T-cell (primary cell): ENCODE measurements at regions of chr6 and their contacts with region 1.

Region 1: DNA sequence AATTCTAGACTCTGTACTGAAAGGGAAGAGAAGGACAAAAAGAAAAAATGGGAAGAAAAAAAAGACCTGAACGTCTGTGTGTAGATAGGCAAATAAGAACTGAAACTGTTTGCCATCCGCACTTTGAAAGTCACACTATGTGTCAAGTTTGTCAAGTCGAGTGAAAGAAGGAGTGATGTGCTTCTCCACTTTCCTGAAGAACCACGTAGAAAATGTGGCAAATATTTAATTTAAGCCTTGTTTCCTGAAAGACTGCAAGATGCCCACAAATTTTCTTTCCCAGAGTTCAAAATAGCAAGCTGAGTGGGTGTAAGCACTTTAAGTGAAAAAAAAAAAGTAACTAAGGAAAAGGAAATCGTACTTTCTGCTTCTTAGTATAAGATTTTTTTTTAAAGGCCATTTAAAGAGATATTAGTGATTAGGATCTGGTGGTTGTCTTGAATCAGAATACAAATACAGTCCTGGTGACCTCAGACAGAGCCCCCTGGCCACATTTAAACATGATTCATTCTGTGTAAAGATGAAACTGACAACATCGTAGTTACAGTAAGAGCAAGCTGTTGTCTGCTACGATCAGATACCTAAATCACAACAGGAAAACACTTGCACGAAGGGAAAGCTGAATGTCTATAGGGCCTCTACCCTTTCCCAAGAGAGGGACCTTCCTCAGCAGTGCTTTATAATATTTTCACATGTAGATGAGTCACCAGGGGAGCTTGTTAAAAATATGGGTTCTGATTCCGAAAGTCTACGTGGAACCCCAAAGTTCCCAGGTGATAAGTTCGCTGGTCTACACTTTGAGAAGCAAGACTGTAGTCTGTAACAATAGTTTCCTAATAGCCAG is 102.3 kb downstream of the HIVEP2 start:
- DNase-seq: peak in 11 of 35 experiments; percentile 18 to 82 (median 33)
- ATAC-seq: peak; percentile 67 to 75 (median 71)
- H3K4me3 ChIP-seq: peak overlapping the region; percentile 15 to 45
- H3K4me3 Mint-ChIP-seq: peak overlapping the region; percentile 75 to 89 (median 79)
- H3K27ac ChIP-seq: peak overlapping the region; percentile 94
- H3K27ac Mint-ChIP-seq: peak overlapping the region; percentile 90 to 97
- H3K4me1 ChIP-seq: peaks cover 37 to 65% of the 10 kb centered on the region in 2 experiments
- H3K4me1 Mint-ChIP-seq: peaks cover 91 to 93% (median 92%) of the 10 kb centered on the region in 3 donors
- H3K27me3 ChIP-seq: no peaks in the 10 kb centered on the region
- H3K27me3 Mint-ChIP-seq: no peaks in the 10 kb centered on the region

Region 2: GRCh38 chr6:142819603-142820337 is 22.9 kb before region 1 on chr6:
- CTCF ChIA-PET with region 1: interaction called in 1 of 2 experiments, 8 read pairs
- POLR2A ChIA-PET with region 1: interaction called, 4 to 10 read pairs
- DNase-seq: peak in 3 of 35 experiments; percentile 19 to 77 (median 23)
- ATAC-seq: peak; percentile 49 to 78 (median 54)
- H3K4me3 ChIP-seq: peak overlapping the region; percentile 40 to 49
- H3K4me3 Mint-ChIP-seq: peak overlapping the region; percentile 80 to 82 (median 82)
- H3K27ac ChIP-seq: peak overlapping the region; percentile 89
- H3K27ac Mint-ChIP-seq: peak overlapping the region; percentile 85 to 94
- H3K4me1 ChIP-seq: peaks cover 40 to 49% of the 10 kb centered on the region in 2 experiments
- H3K4me1 Mint-ChIP-seq: peaks cover 81 to 85% (median 82%) of the 10 kb centered on the region in 3 donors
- H3K27me3 ChIP-seq: no peaks in the 10 kb centered on the region
- H3K27me3 Mint-ChIP-seq: no peaks in the 10 kb centered on the region

Region 3: DNA sequence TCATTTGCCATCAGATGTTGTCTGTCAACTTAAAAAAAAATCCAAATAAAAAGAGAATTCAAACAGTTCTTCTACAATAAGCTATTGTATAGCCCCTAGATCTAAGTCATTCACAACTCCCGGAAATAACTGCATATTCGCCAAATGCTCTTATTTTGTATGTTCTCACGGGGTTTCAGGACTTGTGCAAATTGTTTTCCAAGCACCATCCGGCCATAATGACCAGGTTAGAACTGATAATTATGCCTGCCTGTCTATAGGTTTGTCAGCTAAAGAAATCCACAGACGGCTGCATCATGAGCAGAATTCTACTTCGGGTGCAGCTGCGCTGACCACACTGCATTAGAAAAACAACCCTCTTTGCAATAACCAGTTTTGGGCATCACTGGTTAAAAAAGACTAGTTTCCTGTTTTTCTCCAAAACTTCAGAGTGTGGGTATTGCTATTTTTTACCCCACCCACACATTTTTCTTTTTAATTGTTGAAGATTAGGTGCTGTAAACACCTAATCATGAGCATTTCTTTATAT is 14.7 kb after region 1 on chr6:
- CTCF ChIA-PET with region 1: interaction called, 3 to 12 read pairs
- POLR2A ChIA-PET with region 1: interaction called, 3 to 15 read pairs
- DNase-seq: peak in 23 of 35 experiments; percentile 9 to 71 (median 45)
- ATAC-seq: peak; percentile 49 to 61 (median 56)
- H3K4me3 ChIP-seq: peak overlapping the region; percentile 35 to 42
- H3K4me3 Mint-ChIP-seq: peak overlapping the region; percentile 75 to 81 (median 76)
- H3K27ac ChIP-seq: peak overlapping the region; percentile 93
- H3K27ac Mint-ChIP-seq: peak overlapping the region; percentile 99
- H3K4me1 ChIP-seq: peaks cover 65 to 71% of the 10 kb centered on the region in 2 experiments
- H3K4me1 Mint-ChIP-seq: peaks cover 94 to 96% (median 95%) of the 10 kb centered on the region in 3 donors
- H3K27me3 ChIP-seq: no peaks in the 10 kb centered on the region
- H3K27me3 Mint-ChIP-seq: no peaks in the 10 kb centered on the region

Region 4: GRCh38 chr6:142952614-142953013 is 110.0 kb after region 1 on chr6:
- CTCF ChIA-PET with region 1: no interaction called
- POLR2A ChIA-PET with region 1: no interaction called
- DNase-seq: peak in 1 of 35 experiments; percentile 19
- ATAC-seq: peak in 1 of 4 experiments; percentile 19
- H3K4me3 ChIP-seq: no peak overlapping the region
- H3K4me3 Mint-ChIP-seq: no peak overlapping the region
- H3K27ac ChIP-seq: no peak overlapping the region
- H3K27ac Mint-ChIP-seq: peak overlapping the region; percentile 79 to 82
- H3K4me1 ChIP-seq: peaks cover 0 to 3% of the 10 kb centered on the region in 2 experiments
- H3K4me1 Mint-ChIP-seq: peaks cover 16 to 32% (median 23%) of the 10 kb centered on the region in 3 donors
- H3K27me3 ChIP-seq: no peaks in the 10 kb centered on the region
- H3K27me3 Mint-ChIP-seq: no peaks in the 10 kb centered on the region